ENCODE measurements at regions of chr16 and their contacts with region 1.

Region 1: GRCh38 chr16:67198238-67198734 is 645 bp upstream of the ELMO3 start:
- DNase-seq: peak; percentile 70
- H3K4me3 ChIP-seq: peak overlapping the region in 1 of 3 experiments; percentile 3
- H3K27ac ChIP-seq: peak overlapping the region; percentile 24
- H3K4me1 ChIP-seq: peaks cover 28% of the 10 kb centered on the region
- H3K27me3 ChIP-seq: no peaks in the 10 kb centered on the region
- CTCF ChIP-seq: peak; percentile 98 to 99

Region 2: DNA sequence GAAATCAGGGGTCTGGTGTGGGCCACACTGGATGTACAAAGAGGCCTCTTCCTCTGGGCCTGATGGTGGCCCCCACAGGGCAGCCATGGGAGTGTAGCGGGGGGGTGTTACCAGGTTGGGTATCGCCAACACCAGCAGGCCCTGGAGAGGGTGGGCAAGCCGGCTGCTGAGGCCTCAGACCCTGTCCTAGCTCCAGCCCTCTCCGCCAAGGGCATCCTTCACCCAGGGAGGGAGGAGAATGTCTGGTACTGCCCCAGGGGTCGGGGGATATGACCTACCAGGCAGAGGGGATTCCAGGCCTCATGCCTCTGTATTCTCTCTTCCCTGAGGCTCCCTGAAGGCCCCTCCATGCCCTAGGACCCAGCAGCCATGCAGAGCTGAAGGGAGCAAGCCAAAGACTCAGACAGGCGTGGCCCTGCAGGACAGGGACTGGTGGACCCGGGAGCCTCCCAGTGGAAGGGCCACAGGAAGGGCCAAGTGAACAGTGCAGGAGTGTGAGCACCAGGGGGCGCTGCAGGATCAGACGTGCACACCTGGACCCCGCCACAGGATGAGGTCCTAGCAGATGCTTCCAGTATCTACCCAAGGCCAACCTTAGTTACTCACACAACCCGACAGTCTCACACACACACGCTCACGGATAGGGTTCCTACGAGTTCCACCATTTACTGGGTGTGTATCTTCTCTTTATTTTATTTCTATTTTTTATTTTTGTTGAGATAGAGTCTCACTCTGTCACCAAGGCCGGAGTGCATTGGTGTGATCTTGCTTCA is 220.8 kb before region 1 on chr16:
- CTCF ChIA-PET with region 1: interaction called, 4 read pairs
- dilution Hi-C with region 1: no loop called
- in situ Hi-C with region 1: no loop called
- intact Hi-C with region 1: loop called (anchors 1 kb)
- DNase-seq: peak; percentile 69
- H3K4me3 ChIP-seq: no peak overlapping the region
- H3K27ac ChIP-seq: no peak overlapping the region
- H3K4me1 ChIP-seq: peaks cover 10% of the 10 kb centered on the region
- H3K27me3 ChIP-seq: no peaks in the 10 kb centered on the region
- CTCF ChIP-seq: peak; percentile 91 to 98

Region 3: DNA sequence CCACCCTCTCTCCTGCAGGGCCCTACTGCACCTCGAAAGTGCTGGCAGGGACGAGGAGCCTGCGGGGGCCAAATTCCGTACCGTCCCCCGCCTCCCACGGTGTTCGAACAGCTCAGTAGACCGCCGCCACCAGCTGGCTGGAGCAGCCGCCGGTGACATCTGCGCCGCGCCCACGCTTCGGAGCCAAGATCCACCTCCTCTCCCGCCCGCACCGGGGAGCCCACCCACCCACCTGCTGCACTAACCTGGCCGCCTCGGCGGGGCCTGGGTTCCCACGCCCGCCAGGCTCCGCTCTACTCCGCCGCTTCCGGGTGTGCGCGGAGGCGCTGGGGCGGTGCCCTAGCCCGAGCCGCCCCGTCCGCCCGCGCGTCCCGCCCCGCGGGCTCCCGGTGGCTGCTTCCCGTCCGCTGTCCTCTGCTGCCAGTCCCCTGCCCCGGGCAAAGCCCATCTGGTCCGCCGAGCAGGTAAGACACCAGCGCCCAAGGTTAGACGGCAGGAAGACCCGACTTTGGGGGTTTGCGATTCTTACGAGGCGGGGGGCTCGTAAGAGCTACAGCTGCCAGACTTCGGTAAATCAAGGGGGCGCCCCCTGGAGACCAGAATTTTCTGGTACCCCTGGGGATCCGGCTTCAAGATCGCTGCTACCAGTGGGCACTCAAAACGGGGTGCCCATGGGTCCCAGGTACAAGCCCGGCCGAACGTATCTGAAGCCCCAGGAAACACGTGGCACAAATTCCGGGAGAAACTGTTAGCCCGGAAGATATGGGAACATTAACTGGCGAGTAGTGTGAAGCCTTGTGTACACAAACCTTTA is 38.5 kb before region 1 on chr16 and contains the starts of genes FBXL8 and TRADD:
- CTCF ChIA-PET with region 1: no interaction called
- dilution Hi-C with region 1: no loop called
- in situ Hi-C with region 1: no loop called
- intact Hi-C with region 1: loop called (anchors 1 kb)
- DNase-seq: peak; percentile 73
- H3K4me3 ChIP-seq: peak within 1 kb of the TSS; percentile 64 to 99 (median 72)
- H3K27ac ChIP-seq: peak within 1 kb of the TSS; percentile 40
- H3K4me1 ChIP-seq: peaks cover 15% of the 10 kb centered on the region
- H3K27me3 ChIP-seq: no peaks in the 10 kb centered on the region
- CTCF ChIP-seq: peak; percentile 4 to 54
- total RNA-seq, gene FBXL8: 12.0 to 14.6 TPM
- total RNA-seq, gene TRADD: 17.8 to 18.6 TPM

Region 4: DNA sequence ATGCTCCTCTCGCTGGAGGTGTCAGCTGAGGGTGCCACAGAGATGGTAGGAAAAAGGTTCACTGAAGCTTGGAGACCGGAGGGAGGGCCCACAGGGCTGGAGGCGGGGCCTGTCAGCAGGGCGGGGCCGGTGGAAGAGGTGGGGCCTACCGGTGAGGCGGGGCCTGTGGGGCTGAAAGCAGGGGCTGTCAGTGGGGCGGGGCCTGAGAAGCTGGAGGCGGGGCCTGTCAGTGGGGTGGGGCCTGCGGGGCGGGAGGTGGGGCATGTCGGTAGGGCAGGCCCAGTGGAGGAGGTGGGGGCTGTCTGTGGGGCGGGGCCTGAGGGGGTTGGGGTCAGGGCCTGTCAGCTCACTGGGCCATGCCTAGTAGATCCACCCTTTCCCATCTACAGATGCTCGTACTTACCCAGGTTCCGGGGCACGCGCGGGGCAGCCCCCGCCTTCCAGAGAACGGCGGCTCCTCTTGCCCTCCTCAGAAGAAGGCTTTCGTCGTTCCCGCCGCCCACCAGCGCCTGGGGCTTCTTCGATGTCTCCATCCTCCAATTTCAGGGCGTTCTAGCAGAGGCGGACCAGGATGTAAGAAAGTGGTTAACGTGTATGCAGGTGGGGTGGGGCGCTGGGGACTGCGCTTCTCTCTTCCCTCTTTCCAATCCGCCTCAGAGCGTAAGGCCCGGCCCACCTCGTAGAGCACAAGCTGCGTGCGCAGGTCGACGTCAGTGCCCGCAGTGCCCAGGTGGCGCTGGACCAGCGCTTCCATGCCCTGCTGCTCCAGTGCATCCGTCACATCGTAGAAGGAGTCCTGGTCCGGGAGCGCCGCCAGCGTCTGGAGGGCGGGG is 38.5 kb after region 1 on chr16:
- CTCF ChIA-PET with region 1: no interaction called
- dilution Hi-C with region 1: loop called (anchors 5 kb)
- in situ Hi-C with region 1: no loop called
- intact Hi-C with region 1: no loop called
- DNase-seq: peak; percentile 71
- H3K4me3 ChIP-seq: no peak overlapping the region
- H3K27ac ChIP-seq: no peak overlapping the region
- H3K4me1 ChIP-seq: peaks cover 28% of the 10 kb centered on the region
- H3K27me3 ChIP-seq: no peaks in the 10 kb centered on the region
- CTCF ChIP-seq: no peak

Region 5: DNA sequence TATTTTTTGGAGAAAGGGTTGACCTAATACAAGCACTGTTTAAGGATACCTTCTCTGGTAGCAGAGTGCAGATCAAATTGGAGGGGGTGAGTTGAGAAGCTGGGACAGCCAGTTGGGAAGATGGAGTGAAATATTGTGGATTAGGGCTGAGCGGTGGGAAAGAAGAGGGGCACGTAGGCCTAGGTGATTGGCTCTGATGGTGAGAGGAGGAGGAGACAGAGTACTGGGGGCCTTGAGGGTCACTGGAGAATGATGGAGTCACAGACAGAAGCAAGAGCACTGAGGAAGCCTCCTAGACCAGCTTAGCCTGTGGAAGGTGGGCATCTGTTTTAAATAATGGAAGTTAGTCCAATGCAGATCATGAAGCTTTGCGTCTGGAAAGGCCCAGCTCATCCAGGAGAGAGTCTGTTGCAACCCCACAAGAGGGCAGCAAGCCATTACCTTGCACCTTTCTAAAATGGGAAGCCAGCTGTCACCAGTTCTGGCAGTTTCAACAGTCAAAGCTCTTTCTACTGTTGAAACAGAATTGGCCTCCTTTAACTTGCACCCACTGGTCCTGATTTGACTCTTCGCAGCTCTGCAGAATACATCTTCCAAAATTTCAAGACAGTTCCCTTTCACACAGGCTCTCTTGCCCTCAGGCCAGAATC is 62.3 kb after region 1 on chr16:
- CTCF ChIA-PET with region 1: no interaction called
- dilution Hi-C with region 1: loop called (anchors 5 kb)
- in situ Hi-C with region 1: no loop called
- intact Hi-C with region 1: no loop called
- DNase-seq: peak; percentile 50
- H3K4me3 ChIP-seq: no peak overlapping the region
- H3K27ac ChIP-seq: no peak overlapping the region
- H3K4me1 ChIP-seq: no peaks in the 10 kb centered on the region
- H3K27me3 ChIP-seq: peaks cover 3% of the 10 kb centered on the region
- CTCF ChIP-seq: peak; percentile 71 to 82

Region 6: GRCh38 chr16:67470359-67470758 is 272.1 kb after region 1 on chr16:
- CTCF ChIA-PET with region 1: no interaction called
- dilution Hi-C with region 1: no loop called
- in situ Hi-C with region 1: no loop called
- intact Hi-C with region 1: loop called (anchors 1 kb)
- DNase-seq: no peak
- H3K4me3 ChIP-seq: no peak overlapping the region
- H3K27ac ChIP-seq: no peak overlapping the region
- H3K4me1 ChIP-seq: peaks cover 10% of the 10 kb centered on the region
- H3K27me3 ChIP-seq: no peaks in the 10 kb centered on the region
- CTCF ChIP-seq: no peak